ENCODE measurements at regions of chr14 and their contacts with region 1.

Region 1: GRCh38 chr14:74459289-74459946 is 33.4 kb upstream of the SYNDIG1L start:
- DNase-seq: peak; percentile 33 to 84
- H3K4me3 ChIP-seq: no peak overlapping the region
- H3K27ac ChIP-seq: no peak overlapping the region
- H3K4me1 ChIP-seq: peaks cover 0 to 3% (median 2%) of the 10 kb centered on the region in 4 experiments; a peak in 5 of 7 replicates
- H3K27me3 ChIP-seq: no peaks in the 10 kb centered on the region
- CTCF ChIP-seq: peak; percentile 68 to 89 (median 87)
- EP300 ChIP-seq: no peak
- POLR2A ChIP-seq: no peak
- RAD21 ChIP-seq: peak; percentile 38 to 69; a peak in 3 of 4 replicates

Region 2: GRCh38 chr14:74324931-74325361 is 134.5 kb before region 1 on chr14:
- CTCF ChIA-PET with region 1: interaction called, 13 read pairs
- POLR2A ChIA-PET with region 1: no interaction called
- DNase-seq: peak in 1 of 2 experiments; percentile 57
- H3K4me3 ChIP-seq: no peak overlapping the region
- H3K27ac ChIP-seq: peak overlapping the region; percentile 66; the same call in 1 of the 2 replicates
- H3K4me1 ChIP-seq: peaks cover 16 to 22% (median 19%) of the 10 kb centered on the region in 4 experiments
- H3K27me3 ChIP-seq: no peaks in the 10 kb centered on the region
- CTCF ChIP-seq: peak in 2 of 3 experiments; percentile 50 to 61; a peak in 2 of 4 replicates
- EP300 ChIP-seq: no peak
- POLR2A ChIP-seq: 0 out of 3 replicates have a peak, but pooled peaks of 1 of the 2 experiments have one; percentile 25
- RAD21 ChIP-seq: peak; percentile 77 to 78

Region 3: DNA sequence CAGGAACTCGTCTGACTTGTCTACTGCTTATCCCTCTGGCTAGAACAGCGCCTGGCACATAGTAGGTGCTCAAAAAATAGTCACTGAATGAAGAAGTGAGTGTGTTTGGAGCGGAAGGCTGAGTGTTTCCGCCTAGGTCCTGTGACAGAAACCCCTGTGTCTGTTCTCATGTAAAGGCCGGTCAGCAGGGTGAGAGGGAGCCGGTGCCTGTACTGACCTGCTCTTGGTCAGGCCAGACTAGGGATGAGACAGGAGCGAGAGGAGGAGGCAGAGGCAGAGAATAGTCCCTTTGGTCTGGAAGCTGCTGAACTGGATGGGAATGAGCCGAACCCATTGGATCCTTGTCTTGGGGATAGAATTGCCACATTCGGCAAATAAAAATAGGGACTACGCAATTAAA is 90.6 kb before region 1 on chr14:
- CTCF ChIA-PET with region 1: interaction called, 22 read pairs
- POLR2A ChIA-PET with region 1: interaction called, 3 read pairs
- DNase-seq: no peak
- H3K4me3 ChIP-seq: no peak overlapping the region
- H3K27ac ChIP-seq: no peak overlapping the region
- H3K4me1 ChIP-seq: peaks cover 0 to 6% (median 4%) of the 10 kb centered on the region in 4 experiments; a peak in 4 of 7 replicates
- H3K27me3 ChIP-seq: no peaks in the 10 kb centered on the region
- CTCF ChIP-seq: no peak
- EP300 ChIP-seq: no peak
- POLR2A ChIP-seq: no peak
- RAD21 ChIP-seq: no peak

Region 4: GRCh38 chr14:74414403-74415114 is 44.9 kb before region 1 on chr14:
- CTCF ChIA-PET with region 1: interaction called, 14 read pairs
- POLR2A ChIA-PET with region 1: no interaction called
- DNase-seq: no peak
- H3K4me3 ChIP-seq: peak overlapping the region in 1 of 4 experiments; percentile 5; a peak in 1 of 8 replicates
- H3K27ac ChIP-seq: no peak overlapping the region
- H3K4me1 ChIP-seq: peaks cover 11 to 31% (median 19%) of the 10 kb centered on the region in 4 experiments
- H3K27me3 ChIP-seq: no peaks in the 10 kb centered on the region
- CTCF ChIP-seq: no peak
- EP300 ChIP-seq: no peak
- POLR2A ChIP-seq: no peak
- RAD21 ChIP-seq: no peak

Region 5: DNA sequence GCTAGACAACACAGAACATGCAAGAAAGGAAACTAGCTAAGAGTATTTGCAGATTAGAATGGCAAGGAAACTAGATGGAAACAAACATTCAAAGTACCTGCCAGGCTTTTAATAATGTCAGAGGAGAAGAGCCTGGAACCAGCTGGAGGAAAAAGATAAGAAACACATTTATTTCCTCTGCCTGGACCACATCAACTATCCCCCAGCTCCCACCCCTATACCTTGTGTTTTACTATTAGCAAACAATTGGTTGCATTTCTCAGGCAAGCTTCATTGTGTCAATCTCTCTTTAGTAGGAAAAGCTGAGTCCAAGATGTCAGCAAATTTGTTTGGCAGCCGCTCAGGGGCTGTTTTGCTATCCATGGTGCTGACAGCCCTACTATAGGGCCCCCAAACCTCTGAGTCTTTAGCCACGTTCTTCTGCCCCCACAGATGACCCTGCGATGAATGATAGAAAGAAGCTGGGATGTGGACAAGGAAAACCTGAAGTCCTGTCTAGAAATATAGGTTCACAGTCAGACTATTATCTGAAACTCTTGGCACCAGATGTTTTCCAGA is 21.8 kb before region 1 on chr14:
- CTCF ChIA-PET with region 1: interaction called, 25 read pairs
- POLR2A ChIA-PET with region 1: interaction called, 4 read pairs
- DNase-seq: peak in 1 of 2 experiments; percentile 49
- H3K4me3 ChIP-seq: no peak overlapping the region
- H3K27ac ChIP-seq: no peak overlapping the region
- H3K4me1 ChIP-seq: peaks cover 2 to 12% (median 5%) of the 10 kb centered on the region in 4 experiments; a peak in 5 of 7 replicates
- H3K27me3 ChIP-seq: no peaks in the 10 kb centered on the region
- CTCF ChIP-seq: no peak
- EP300 ChIP-seq: no peak
- POLR2A ChIP-seq: no peak
- RAD21 ChIP-seq: 0 out of 4 replicates have a peak, but pooled peaks have one; percentile 4 to 10

Region 6: GRCh38 chr14:74486164-74486563 is 26.7 kb after region 1 on chr14:
- CTCF ChIA-PET with region 1: interaction called, 181 read pairs
- POLR2A ChIA-PET with region 1: interaction called, 3 read pairs
- DNase-seq: no peak
- H3K4me3 ChIP-seq: no peak overlapping the region
- H3K27ac ChIP-seq: no peak overlapping the region
- H3K4me1 ChIP-seq: peaks cover 0 to 2% (median 2%) of the 10 kb centered on the region in 4 experiments; a peak in 3 of 7 replicates
- H3K27me3 ChIP-seq: no peaks in the 10 kb centered on the region
- CTCF ChIP-seq: no peak
- EP300 ChIP-seq: no peak
- POLR2A ChIP-seq: no peak
- RAD21 ChIP-seq: no peak